Mammary epithelial cell (primary cell): ENCODE measurements at regions of chr6 and their contacts with region 1.

Region 1: DNA sequence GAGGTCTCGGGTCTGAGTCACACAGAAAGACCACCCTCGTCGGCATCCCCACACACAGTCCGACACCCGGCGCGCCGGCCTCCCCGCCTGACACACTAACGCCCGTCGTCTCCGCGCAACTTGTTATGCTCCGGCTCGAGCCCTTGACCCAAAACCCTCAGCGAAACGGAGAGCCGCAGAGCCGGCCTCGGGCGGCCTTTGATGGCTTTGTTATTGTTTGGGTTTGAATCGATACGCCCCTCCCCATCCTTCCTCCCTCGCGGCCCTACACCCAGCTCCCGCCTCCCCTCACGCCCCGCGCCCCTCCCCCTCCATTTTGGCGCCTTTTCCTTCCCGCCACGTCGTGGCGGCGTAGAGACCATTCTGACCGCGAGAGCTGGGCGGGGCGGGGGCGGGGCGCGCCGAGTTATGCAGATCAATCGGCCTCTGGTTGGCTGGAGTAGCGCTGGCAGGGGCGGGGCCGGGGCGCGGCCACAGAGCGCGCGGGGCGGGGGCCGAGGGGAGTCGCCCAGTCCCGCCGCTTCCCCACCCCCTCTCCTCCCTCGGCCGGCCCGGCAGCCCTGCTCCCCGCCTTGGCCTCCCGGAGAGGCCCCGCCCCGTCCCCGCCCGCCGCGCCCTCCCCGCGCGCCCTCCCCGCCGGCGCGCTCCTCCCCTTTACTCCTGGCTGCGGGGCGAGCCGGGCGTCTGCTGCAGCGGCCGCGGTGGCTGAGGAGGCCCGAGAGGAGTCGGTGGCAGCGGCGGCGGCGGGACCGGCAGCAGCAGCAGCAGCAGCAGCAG is at the start of gene PIM1:
- DNase-seq: peak; percentile 96
- H3K4me3 ChIP-seq: peak within 1 kb of the TSS; percentile 94 to 98 (median 98)
- H3K27ac ChIP-seq: peak within 1 kb of the TSS; percentile 87
- H3K4me1 ChIP-seq: peaks cover 22% of the 10 kb centered on the region
- H3K27me3 ChIP-seq: no peaks in the 10 kb centered on the region
- CTCF ChIP-seq: no peak
- total RNA-seq, gene PIM1: 4.7 to 29.6 TPM

Region 2: DNA sequence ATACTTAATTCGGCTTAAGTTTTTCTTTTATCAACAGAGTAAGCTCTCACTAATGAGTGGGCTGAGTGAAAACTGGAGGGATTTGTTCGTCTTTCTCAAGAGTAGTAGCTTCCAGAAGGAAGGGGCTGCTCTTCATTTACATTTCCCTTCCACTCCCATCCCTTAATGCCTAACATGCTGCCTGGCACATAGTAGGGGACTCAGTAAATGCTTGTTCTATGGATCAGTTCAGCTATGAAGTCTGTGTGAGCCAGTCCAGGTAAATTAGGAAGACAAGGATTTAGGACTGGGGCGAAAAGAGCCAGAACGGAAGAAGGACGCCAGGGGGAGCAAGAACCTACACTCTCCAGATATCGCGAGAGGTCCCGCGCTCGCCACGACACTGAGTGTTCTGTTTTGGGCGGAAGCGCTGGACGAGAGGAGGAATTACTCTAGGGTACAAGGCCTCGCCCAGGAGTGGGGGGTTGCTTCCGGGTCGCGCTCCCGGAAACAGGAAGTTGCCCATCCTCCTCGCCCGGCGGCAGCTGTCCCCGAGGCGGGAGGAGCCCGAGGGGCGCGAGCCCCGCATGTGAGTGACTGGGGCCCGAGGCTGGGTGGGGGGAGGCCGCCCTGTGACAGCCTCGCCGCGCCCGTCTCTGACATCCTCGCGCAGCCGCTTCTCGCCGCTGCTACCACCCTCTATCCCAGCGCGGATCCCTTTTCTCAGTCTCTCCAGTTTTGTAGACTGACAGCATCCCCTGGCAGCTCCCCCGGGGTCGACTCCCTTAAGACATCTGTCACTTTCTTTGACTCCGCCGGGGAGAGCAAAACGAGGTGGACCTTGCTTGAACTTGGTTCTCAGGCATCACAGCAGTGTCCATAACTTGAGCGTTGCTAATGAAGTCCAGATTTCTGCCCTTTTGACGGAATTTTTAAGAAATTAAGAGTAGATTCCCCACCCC is 284.0 kb before region 1 on chr6 and contains the start of gene C6orf89:
- CTCF ChIA-PET with region 1: no interaction called
- dilution Hi-C with region 1: no loop called
- in situ Hi-C with region 1: no loop called
- intact Hi-C with region 1: loop called (anchors 1 kb)
- DNase-seq: peak; percentile 93
- H3K4me3 ChIP-seq: peak within 1 kb of the TSS; percentile 53 to 70 (median 64)
- H3K27ac ChIP-seq: peak within 1 kb of the TSS; percentile 57
- H3K4me1 ChIP-seq: peaks cover 10% of the 10 kb centered on the region
- H3K27me3 ChIP-seq: no peaks in the 10 kb centered on the region
- CTCF ChIP-seq: peak; percentile 68 to 89
- total RNA-seq, gene C6orf89: 34.3 to 42.2 TPM

Region 3: GRCh38 chr6:37051138-37052026 is 118.3 kb before region 1 on chr6:
- CTCF ChIA-PET with region 1: interaction called, 17 read pairs
- dilution Hi-C with region 1: no loop called
- in situ Hi-C with region 1: loop called (anchors 5 kb)
- intact Hi-C with region 1: loop called (anchors 1 kb)
- DNase-seq: peak; percentile 65
- H3K4me3 ChIP-seq: no peak overlapping the region
- H3K27ac ChIP-seq: no peak overlapping the region
- H3K4me1 ChIP-seq: peaks cover 36% of the 10 kb centered on the region
- H3K27me3 ChIP-seq: no peaks in the 10 kb centered on the region
- CTCF ChIP-seq: peak; percentile 65 to 96

Region 4: GRCh38 chr6:37102279-37103168 is 67.2 kb before region 1 on chr6:
- CTCF ChIA-PET with region 1: no interaction called
- dilution Hi-C with region 1: loop called (anchors 5 kb)
- in situ Hi-C with region 1: no loop called
- intact Hi-C with region 1: loop called (anchors 1 kb)
- DNase-seq: peak; percentile 74
- H3K4me3 ChIP-seq: peak overlapping the region; percentile 19 to 34 (median 22)
- H3K27ac ChIP-seq: peak overlapping the region; percentile 66
- H3K4me1 ChIP-seq: peaks cover 19% of the 10 kb centered on the region
- H3K27me3 ChIP-seq: no peaks in the 10 kb centered on the region
- CTCF ChIP-seq: no peak

Region 5: DNA sequence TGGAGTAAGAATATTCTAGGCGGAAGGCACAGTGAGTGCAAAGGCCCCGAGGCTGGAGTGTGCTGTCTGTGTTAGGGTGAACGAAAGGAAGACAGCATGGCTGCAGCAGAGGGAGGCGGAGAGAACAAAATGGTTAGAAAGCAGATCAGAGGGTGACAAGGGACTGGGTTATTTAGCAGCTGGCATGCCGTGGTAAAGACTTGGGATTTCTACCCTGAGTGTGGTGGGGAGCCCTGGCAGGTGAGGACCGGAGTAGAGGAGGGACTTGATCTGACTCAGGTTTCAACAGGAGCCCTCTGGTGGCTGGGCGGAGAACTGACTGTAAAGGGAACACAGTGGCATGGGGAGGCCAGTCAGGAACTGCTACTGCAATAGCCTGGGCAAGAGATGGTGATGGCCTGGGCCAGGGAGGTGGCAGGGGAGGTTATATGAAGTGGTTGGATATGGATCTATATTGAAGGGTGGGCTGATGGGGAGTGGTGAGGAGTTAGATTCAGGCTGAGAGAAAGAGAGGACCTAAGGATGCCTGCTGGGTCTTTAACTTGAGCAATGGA is 38.3 kb after region 1 on chr6:
- CTCF ChIA-PET with region 1: no interaction called
- dilution Hi-C with region 1: no loop called
- in situ Hi-C with region 1: no loop called
- intact Hi-C with region 1: loop called (anchors 1 kb)
- DNase-seq: peak; percentile 77
- H3K4me3 ChIP-seq: no peak overlapping the region
- H3K27ac ChIP-seq: no peak overlapping the region
- H3K4me1 ChIP-seq: peaks cover 7% of the 10 kb centered on the region
- H3K27me3 ChIP-seq: no peaks in the 10 kb centered on the region
- CTCF ChIP-seq: peak; percentile 86 to 91

Region 6: DNA sequence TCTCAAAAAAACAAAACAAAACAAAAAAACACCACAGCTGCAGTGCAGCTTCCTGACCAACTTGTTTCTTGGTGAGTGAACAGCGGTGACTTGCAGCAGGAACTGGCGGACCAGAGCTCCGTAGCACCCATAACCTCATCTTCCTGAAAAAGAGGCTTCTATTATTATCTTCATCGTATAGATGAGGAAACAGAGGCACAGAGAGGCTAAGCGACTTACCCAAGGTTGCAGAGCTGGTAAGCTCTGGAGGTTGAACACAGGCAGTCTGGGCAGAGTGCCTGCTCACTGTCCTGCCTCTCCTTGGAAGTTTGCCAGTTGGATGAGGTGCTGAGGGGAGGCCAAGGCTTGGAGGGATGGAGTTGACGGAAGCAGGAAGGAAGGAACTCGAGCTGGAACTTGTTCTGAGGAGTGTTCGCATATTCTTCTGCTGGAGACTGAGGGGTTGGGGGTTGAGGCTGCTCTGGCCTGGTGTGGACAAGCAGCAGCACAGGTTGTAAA is 377.9 kb after region 1 on chr6:
- CTCF ChIA-PET with region 1: no interaction called
- dilution Hi-C with region 1: no loop called
- in situ Hi-C with region 1: no loop called
- intact Hi-C with region 1: no loop called
- DNase-seq: peak; percentile 91
- H3K4me3 ChIP-seq: no peak overlapping the region
- H3K27ac ChIP-seq: no peak overlapping the region
- H3K4me1 ChIP-seq: peaks cover 24% of the 10 kb centered on the region
- H3K27me3 ChIP-seq: no peaks in the 10 kb centered on the region
- CTCF ChIP-seq: no peak